A673 (cell line): ENCODE measurements at regions of chr3 and their contacts with region 1.

Region 1: DNA sequence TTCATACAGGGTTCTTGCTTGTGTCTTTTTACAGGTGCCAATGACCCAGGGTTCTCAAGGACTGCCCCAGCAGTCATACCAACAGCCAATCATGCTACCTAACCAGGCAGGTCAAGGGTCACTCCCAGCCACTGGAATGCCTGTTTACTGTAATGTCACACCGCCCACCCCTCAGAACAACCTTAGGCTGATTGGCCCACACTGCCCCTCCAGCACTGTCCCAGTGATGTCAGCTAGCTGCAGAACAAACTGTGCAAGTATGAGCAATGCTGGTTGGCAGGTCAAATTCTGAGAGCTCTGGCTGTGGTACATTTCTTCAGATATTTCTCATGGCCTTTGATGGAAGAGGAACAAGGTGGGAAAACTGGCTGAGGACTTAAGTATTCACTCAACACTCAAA is 154.3 kb downstream of the ARPP21 start:
- DNase-seq: no peak
- H3K4me3 ChIP-seq: no peak overlapping the region
- H3K27ac ChIP-seq: no peak overlapping the region
- H3K4me1 ChIP-seq: no peaks in the 10 kb centered on the region
- H3K27me3 ChIP-seq: no peaks in the 10 kb centered on the region
- CTCF ChIP-seq: no peak

Region 2: DNA sequence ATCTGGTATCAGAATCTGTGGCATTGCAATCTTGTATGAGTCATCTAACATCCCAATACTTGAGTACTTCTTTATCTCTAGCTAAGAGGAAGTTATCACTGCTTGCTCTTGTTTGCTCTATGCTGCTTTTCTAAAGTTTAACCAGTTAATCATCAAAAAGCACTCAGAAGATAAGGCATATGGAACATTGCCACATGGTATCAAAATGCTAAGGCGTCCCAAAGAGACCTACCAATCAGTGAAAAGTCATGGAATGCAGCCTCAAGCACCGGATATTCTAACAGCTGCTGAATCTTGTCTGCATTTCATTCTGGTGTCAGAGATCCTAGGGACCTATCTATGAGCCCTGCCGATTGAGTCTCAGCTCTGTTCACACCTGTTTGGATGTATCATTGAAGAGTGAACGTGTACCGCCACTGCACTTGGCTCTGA is 38.5 kb after region 1 on chr3:
- CTCF ChIA-PET with region 1: no interaction called
- POLR2A ChIA-PET with region 1: no interaction called
- intact Hi-C with region 1: loop called (anchors 1 kb)
- DNase-seq: no peak
- H3K4me3 ChIP-seq: no peak overlapping the region
- H3K27ac ChIP-seq: no peak overlapping the region
- H3K4me1 ChIP-seq: no peaks in the 10 kb centered on the region
- H3K27me3 ChIP-seq: no peaks in the 10 kb centered on the region
- CTCF ChIP-seq: no peak

Region 3: GRCh38 chr3:35883929-35884328 is 90.3 kb after region 1 on chr3:
- CTCF ChIA-PET with region 1: no interaction called
- POLR2A ChIA-PET with region 1: no interaction called
- intact Hi-C with region 1: no loop called
- DNase-seq: no peak
- H3K4me3 ChIP-seq: no peak overlapping the region
- H3K27ac ChIP-seq: no peak overlapping the region
- H3K4me1 ChIP-seq: no peaks in the 10 kb centered on the region
- H3K27me3 ChIP-seq: no peaks in the 10 kb centered on the region
- CTCF ChIP-seq: no peak